Activated B cell treated with CpG ODN at 0.5 μM for 24 hours (primary cell): ENCODE measurements at regions of chr5 and their contacts with region 1.

Region 1: DNA sequence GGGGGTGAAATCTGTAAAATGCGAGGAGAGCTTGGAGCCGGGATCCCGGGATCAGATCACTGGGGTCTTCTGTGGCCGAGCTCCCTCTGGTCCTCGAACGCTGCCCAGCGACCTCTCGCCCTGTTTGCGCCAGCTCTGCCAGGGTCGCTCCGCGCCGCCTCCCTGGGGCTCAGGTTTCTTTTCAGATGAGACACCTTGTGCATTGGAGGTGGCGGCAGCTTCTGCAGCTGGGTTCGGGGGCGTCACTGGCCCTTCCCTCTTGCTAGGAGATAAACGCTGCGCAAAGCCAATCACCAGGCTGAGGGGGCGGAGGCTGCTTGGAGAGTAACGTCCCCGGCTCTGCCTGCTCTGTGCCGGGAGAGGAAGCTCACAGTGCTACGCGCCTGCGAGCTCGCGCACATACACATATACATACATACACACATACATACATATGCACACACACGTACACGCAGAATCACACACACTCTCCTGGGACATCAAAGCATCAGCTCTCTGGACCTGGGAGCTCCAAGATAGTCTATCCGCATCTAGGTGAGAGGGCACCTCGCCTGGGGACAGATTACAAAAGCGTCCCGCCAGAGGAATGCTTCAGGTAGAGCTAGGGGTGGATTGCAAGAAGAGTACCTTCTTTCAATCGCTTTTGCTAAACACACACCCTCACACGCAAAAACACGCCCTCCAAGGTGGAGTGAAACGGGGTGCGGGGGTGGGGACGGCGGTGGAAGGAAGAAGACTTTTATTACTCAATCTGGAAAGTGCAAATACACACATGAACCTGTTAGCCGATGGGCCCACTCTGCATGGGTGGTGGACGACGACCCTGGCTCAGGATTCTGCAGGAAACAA is at the start of gene ST8SIA4:
- DNase-seq: peak; percentile 77
- ATAC-seq: peak; percentile 71
- H3K4me3 Mint-ChIP-seq: peak within 1 kb of the TSS; percentile 99
- H3K27ac Mint-ChIP-seq: peak within 1 kb of the TSS; percentile 99
- H3K4me1 Mint-ChIP-seq: peaks cover 46% of the 10 kb centered on the region
- H3K27me3 Mint-ChIP-seq: no peaks in the 10 kb centered on the region
- CTCF ChIP-seq: no peak
- total RNA-seq, gene ST8SIA4: 105 and 125 TPM in 2 replicates

Region 2: DNA sequence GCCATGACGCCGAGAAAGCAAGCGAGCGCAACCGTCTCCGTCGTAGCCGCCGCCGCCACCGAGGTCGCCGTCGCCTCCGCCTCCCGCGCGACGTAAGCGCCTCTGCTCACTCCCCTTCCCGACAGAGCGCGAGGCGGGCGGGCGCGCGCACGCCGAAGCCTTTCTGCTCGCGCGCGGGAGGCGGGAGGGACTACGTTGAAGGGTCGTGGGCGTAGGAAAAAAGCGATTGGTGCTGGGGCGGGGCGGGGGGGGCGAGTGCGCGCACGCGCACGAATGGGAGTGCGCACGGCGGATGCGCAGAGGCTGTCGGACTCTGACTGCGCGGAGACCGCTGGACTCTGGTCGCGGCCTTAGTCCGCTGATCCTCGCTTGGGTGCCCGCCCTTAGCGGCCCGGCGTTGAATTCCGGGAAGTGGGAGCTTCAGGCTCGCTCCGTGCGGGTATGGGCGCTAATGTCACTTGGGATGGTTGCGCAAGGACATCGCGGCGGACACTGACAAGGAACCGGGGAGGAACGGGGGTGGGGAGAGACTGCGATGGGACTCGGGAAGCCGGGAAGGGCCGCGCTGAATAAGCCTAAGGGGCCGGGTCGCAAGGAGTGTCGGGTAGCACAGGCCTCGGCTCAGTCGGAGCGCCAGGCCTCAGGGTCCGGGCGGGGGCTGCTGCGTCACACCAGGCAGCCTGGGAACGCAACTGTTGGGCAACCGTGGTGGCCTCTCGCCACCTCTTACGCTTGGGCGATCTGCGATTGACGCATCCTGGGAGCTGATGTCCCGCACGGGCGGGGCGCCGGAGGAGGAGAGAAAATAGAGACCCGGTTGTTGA is 1974.2 kb before region 1 on chr5 and contains the start of gene CHD1:
- CTCF ChIA-PET with region 1: no interaction called
- POLR2A ChIA-PET with region 1: interaction called, 10 read pairs
- intact Hi-C with region 1: loop called (anchors 1 kb)
- DNase-seq: peak; percentile 92
- ATAC-seq: peak; percentile 60
- H3K4me3 Mint-ChIP-seq: peak within 1 kb of the TSS; percentile 99
- H3K27ac Mint-ChIP-seq: peak within 1 kb of the TSS; percentile 100
- H3K4me1 Mint-ChIP-seq: peaks cover 71% of the 10 kb centered on the region
- H3K27me3 Mint-ChIP-seq: no peaks in the 10 kb centered on the region
- CTCF ChIP-seq: no peak
- total RNA-seq, gene CHD1: 65.2 and 77.5 TPM in 2 replicates

Region 3: DNA sequence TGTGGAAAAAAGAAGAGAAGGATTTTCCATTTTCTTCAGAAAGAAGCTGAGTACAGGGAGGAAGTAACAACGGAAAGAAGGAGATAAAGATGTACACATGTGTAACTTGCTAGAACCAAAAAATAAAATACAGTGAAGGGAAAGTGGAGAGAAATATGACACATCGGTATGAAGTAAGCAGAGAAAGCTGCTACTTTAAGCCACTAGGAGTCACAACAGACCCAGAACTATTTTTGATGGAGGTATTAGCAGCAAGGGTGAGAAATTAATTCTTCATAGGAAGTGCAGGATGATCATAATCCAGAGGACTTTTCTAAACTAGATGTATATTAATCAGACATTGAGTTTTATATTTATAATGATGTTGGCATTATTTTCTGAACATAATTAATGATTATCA is 279.5 kb before region 1 on chr5:
- CTCF ChIA-PET with region 1: interaction called, 10 read pairs
- POLR2A ChIA-PET with region 1: interaction called, 6 read pairs
- intact Hi-C with region 1: loop called (anchors 2 kb)
- DNase-seq: no peak
- ATAC-seq: peak; percentile 68
- H3K4me3 Mint-ChIP-seq: no peak overlapping the region
- H3K27ac Mint-ChIP-seq: no peak overlapping the region
- H3K4me1 Mint-ChIP-seq: no peaks in the 10 kb centered on the region
- H3K27me3 Mint-ChIP-seq: no peaks in the 10 kb centered on the region
- CTCF ChIP-seq: no peak

Region 4: GRCh38 chr5:100647461-100648230 is 255.6 kb before region 1 on chr5:
- CTCF ChIA-PET with region 1: no interaction called
- POLR2A ChIA-PET with region 1: no interaction called
- intact Hi-C with region 1: no loop called
- DNase-seq: no peak
- ATAC-seq: no peak
- H3K4me3 Mint-ChIP-seq: no peak overlapping the region
- H3K27ac Mint-ChIP-seq: no peak overlapping the region
- H3K4me1 Mint-ChIP-seq: no peaks in the 10 kb centered on the region
- H3K27me3 Mint-ChIP-seq: no peaks in the 10 kb centered on the region
- CTCF ChIP-seq: no peak

Region 5: DNA sequence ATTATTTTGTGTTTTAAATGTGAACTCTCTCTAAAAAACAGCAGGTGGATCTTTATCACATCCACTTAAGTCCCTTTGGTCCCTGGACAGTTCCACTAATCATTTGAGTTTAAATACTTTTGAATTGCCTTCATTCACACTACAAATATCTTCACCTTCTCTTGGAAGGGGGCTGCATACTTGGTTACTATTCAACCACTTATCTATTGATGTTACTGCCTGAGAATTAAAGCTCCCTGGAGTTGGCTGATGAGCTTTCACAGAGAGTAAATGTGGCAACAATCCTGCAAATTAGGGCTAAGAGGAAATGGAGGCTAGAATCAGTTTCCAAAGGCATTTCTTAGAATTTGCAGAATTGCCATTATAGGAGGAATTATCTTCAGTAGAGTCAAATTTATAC is 180.6 kb before region 1 on chr5:
- CTCF ChIA-PET with region 1: no interaction called
- POLR2A ChIA-PET with region 1: no interaction called
- intact Hi-C with region 1: no loop called
- DNase-seq: no peak
- ATAC-seq: no peak
- H3K4me3 Mint-ChIP-seq: no peak overlapping the region
- H3K27ac Mint-ChIP-seq: no peak overlapping the region
- H3K4me1 Mint-ChIP-seq: no peaks in the 10 kb centered on the region
- H3K27me3 Mint-ChIP-seq: no peaks in the 10 kb centered on the region
- CTCF ChIP-seq: no peak

Region 6: DNA sequence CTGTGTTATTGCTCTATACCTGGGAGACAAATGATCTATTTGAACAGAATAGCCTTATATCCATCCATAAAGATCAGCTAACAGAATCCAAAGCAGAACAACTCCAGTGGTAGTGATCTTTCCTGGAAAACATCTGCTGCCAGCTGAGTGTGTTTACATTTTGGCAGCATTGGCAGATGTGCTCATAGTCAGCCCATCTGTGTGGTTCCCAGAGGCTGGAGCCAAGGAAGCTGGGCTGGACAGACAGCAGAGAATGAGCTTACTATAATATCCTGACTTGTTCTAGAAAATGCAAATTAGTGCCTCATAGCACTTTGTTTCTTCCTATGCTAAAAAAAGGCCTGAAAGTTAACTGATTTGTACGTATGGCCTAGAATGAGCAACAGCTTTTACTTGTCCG is 99.9 kb before region 1 on chr5:
- CTCF ChIA-PET with region 1: interaction called, 3 read pairs
- POLR2A ChIA-PET with region 1: interaction called, 13 read pairs
- intact Hi-C with region 1: no loop called
- DNase-seq: no peak
- ATAC-seq: no peak
- H3K4me3 Mint-ChIP-seq: no peak overlapping the region
- H3K27ac Mint-ChIP-seq: no peak overlapping the region
- H3K4me1 Mint-ChIP-seq: peaks cover 29% of the 10 kb centered on the region
- H3K27me3 Mint-ChIP-seq: no peaks in the 10 kb centered on the region
- CTCF ChIP-seq: no peak

Region 7: GRCh38 chr5:100852988-100853449 is 50.2 kb before region 1 on chr5:
- CTCF ChIA-PET with region 1: interaction called, 11 read pairs
- POLR2A ChIA-PET with region 1: interaction called, 153 read pairs
- intact Hi-C with region 1: loop called (anchors 1 kb)
- DNase-seq: no peak
- ATAC-seq: peak; percentile 92
- H3K4me3 Mint-ChIP-seq: peak overlapping the region; percentile 55
- H3K27ac Mint-ChIP-seq: peak overlapping the region; percentile 83
- H3K4me1 Mint-ChIP-seq: peaks cover 55% of the 10 kb centered on the region
- H3K27me3 Mint-ChIP-seq: no peaks in the 10 kb centered on the region
- CTCF ChIP-seq: no peak

Region 8: GRCh38 chr5:100890461-100891008 is 12.7 kb before region 1 on chr5:
- CTCF ChIA-PET with region 1: interaction called, 13 read pairs
- POLR2A ChIA-PET with region 1: interaction called, 170 read pairs
- intact Hi-C with region 1: loop called (anchors 1 kb)
- DNase-seq: no peak
- ATAC-seq: peak; percentile 47
- H3K4me3 Mint-ChIP-seq: peak overlapping the region; percentile 70
- H3K27ac Mint-ChIP-seq: peak overlapping the region; percentile 88
- H3K4me1 Mint-ChIP-seq: peaks cover 72% of the 10 kb centered on the region
- H3K27me3 Mint-ChIP-seq: no peaks in the 10 kb centered on the region
- CTCF ChIP-seq: no peak

Region 9: DNA sequence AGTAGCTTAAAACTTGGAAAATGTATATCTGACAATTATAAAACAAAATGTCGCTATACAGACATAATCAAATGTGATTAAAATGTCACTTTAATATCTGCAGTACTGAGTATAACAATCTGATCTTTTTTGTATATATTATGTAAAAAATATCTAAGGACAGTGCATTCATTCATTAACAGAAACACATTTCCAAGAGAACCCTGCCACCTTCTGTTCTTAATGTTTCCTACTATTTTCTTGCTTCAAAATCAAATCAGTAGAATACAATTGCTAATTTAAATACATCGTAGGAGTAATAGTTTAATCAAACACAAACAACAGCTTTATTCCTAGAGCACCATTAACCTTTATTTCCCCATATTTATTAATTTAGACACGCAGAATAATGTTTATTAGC is 142.4 kb after region 1 on chr5:
- CTCF ChIA-PET with region 1: interaction called, 5 read pairs
- POLR2A ChIA-PET with region 1: interaction called, 3 read pairs
- intact Hi-C with region 1: loop called (anchors 1 kb)
- DNase-seq: no peak
- ATAC-seq: no peak
- H3K4me3 Mint-ChIP-seq: no peak overlapping the region
- H3K27ac Mint-ChIP-seq: no peak overlapping the region
- H3K4me1 Mint-ChIP-seq: no peaks in the 10 kb centered on the region
- H3K27me3 Mint-ChIP-seq: no peaks in the 10 kb centered on the region
- CTCF ChIP-seq: no peak

Region 10: GRCh38 chr5:101080462-101081240 is 177.4 kb after region 1 on chr5:
- CTCF ChIA-PET with region 1: no interaction called
- POLR2A ChIA-PET with region 1: no interaction called
- intact Hi-C with region 1: no loop called
- DNase-seq: no peak
- ATAC-seq: no peak
- H3K4me3 Mint-ChIP-seq: no peak overlapping the region
- H3K27ac Mint-ChIP-seq: no peak overlapping the region
- H3K4me1 Mint-ChIP-seq: no peaks in the 10 kb centered on the region
- H3K27me3 Mint-ChIP-seq: no peaks in the 10 kb centered on the region
- CTCF ChIP-seq: no peak